Gastrocnemius medialis (tissue), 4 donors: ENCODE measurements at regions of chr14 and their contacts with region 1.

Region 1: DNA sequence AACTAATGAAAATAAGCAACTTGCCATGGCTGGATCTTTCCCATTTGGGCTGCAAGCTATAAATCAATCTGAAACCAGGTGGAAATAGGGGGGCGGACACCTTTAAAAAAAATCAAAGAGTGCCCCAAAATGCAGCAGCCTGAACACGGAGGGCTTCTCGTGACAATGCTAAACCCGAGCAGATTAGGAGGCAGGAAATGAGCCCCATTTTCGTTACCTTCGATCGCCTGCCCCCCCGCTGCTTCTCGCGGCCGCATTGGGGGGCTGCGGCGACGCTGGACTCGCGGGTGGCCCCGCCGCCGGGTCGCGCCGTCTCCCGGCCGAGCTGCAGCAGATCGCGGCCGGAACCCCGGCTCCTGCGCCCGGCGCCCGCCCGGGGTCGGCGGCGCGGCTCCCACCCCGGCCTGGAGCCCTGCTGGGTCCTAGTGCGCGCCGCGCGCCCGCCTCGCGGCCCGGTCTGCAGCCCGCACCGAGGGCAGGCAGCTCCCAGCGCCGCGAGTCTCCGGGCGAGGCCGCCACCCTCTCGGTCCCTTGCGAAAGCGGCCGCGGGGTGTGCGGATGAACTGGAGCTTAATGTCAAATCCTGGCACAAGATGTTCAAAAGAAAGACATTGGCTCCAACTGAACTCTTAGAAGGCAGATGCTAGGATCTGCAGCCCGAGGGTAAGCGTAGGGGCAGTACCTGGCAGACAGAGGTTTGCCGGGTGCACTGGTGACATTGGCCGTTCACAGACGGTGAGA is 201.9 kb upstream of the FOXN3 start:
- DNase-seq: peak; percentile 53 to 74
- ATAC-seq: peak; percentile 72 to 77
- H3K4me3 ChIP-seq: peak overlapping the region; percentile 65 to 73 (median 72)
- H3K27ac ChIP-seq: peak overlapping the region; percentile 78 to 87 (median 85)
- H3K4me1 ChIP-seq: peaks cover 36 to 39% of the 10 kb centered on the region in 2 donors
- H3K27me3 ChIP-seq: no peaks in the 10 kb centered on the region
- CTCF ChIP-seq: no peak
- POLR2A ChIP-seq: peak; percentile 48 to 57

Region 2: GRCh38 chr14:89185919-89186855 is 432.8 kb before region 1 on chr14:
- in situ Hi-C with region 1: no loop called
- intact Hi-C with region 1: loop called (anchors 10 kb)
- DNase-seq: peak; percentile 72 to 80
- ATAC-seq: peak; percentile 78 to 84
- H3K4me3 ChIP-seq: peak overlapping the region in 3 of 4 donors; percentile 30 to 36 (median 33)
- H3K27ac ChIP-seq: peak overlapping the region; percentile 89 to 93 (median 92)
- H3K4me1 ChIP-seq: peaks cover 51 to 54% of the 10 kb centered on the region in 2 donors
- H3K27me3 ChIP-seq: no peaks in the 10 kb centered on the region
- CTCF ChIP-seq: no peak
- POLR2A ChIP-seq: peak in 1 of 2 donors; percentile 33

Region 3: DNA sequence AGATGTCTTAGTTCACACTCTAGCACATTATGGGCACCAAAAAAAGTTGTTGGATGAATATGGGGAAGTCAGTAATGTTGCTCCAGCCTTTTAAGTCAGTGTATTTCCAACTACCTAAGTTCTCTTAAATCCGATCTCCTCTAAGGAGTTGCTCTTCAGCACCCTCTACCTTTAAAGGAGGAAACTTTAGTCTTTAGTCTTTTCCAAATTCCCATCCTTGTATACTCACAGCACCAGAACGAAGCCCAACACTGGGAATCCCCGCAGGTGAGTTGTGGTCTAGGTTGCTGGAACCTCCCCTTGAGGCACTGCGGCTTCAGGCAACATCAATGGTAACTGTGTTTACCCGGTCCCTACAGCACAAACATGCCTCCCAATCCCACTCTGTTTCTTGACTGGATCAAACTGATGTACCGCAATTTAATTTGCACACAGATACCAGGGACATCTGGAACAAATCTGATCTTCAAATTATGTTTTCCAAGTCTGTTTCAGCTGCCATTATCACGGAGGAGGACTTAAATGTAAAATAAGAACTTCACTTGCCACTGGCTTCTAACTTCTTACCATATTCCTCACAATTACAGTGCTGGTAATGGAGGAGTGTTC is 381.0 kb before region 1 on chr14:
- in situ Hi-C with region 1: no loop called
- intact Hi-C with region 1: loop called (anchors 10 kb)
- DNase-seq: no peak
- ATAC-seq: peak in 1 of 2 donors; percentile 55
- H3K4me3 ChIP-seq: no peak overlapping the region
- H3K27ac ChIP-seq: no peak overlapping the region
- H3K4me1 ChIP-seq: peaks cover 12 to 32% of the 10 kb centered on the region in 2 donors
- H3K27me3 ChIP-seq: no peaks in the 10 kb centered on the region
- CTCF ChIP-seq: peak; percentile 13 to 53 (median 52)
- POLR2A ChIP-seq: no peak

Region 4: GRCh38 chr14:89660166-89660565 is 41.2 kb after region 1 on chr14:
- in situ Hi-C with region 1: no loop called
- intact Hi-C with region 1: loop called (anchors 2 kb)
- DNase-seq: peak; percentile 51 to 52
- ATAC-seq: peak; percentile 96 to 97
- H3K4me3 ChIP-seq: peak overlapping the region; percentile 12 to 36 (median 24)
- H3K27ac ChIP-seq: peak overlapping the region; percentile 73 to 87 (median 80)
- H3K4me1 ChIP-seq: peaks cover 14 to 18% of the 10 kb centered on the region in 2 donors
- H3K27me3 ChIP-seq: no peaks in the 10 kb centered on the region
- CTCF ChIP-seq: no peak
- POLR2A ChIP-seq: no peak

Region 5: DNA sequence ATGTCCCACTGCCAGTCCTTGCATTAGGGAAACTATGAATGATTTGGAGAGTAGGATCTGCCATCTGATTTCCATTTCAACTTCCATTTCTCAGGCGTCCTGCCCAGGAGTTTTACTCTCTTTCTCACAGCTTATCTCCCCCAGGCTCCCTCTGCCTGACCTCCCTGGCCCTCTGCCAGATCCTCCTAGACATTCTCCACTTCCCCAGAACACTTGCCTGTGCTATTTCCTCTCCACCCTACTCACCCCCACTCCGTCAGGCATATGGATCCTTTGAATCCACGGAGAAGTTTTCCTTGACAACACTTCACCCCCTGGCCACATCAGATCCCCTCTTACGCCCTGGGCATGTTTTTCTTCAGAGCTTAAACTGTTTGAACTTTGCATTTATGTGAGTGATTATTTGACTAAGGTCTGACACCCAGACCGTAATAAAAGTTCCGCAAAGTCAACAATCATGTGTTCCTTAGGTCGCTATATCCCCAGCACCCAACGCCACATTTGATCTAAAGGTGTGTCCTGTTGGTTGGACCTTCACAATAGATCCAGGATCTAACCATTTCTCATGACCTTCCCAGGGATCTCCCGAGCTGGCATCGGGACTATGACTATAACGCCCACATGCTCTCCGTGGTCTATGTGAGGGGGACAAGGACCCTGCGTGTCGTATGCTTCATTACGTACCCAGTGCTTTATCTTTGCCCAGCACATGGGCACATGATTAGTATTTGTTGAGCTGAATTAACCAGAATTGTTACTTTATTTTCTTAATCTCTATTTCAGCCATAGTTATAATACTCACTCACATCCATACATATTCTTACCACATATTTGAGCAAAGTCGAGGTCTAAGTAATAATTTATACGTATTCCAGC is 53.9 kb after region 1 on chr14:
- in situ Hi-C with region 1: no loop called
- intact Hi-C with region 1: no loop called
- DNase-seq: no peak
- ATAC-seq: no peak
- H3K4me3 ChIP-seq: no peak overlapping the region
- H3K27ac ChIP-seq: no peak overlapping the region
- H3K4me1 ChIP-seq: no peaks in the 10 kb centered on the region
- H3K27me3 ChIP-seq: no peaks in the 10 kb centered on the region
- CTCF ChIP-seq: no peak
- POLR2A ChIP-seq: no peak

Region 6: GRCh38 chr14:89701211-89702043 is 82.4 kb after region 1 on chr14:
- in situ Hi-C with region 1: no loop called
- intact Hi-C with region 1: loop called (anchors 5 kb)
- DNase-seq: peak; percentile 67 to 78
- ATAC-seq: peak; percentile 80 to 82
- H3K4me3 ChIP-seq: peak overlapping the region; percentile 61 to 74 (median 68)
- H3K27ac ChIP-seq: peak overlapping the region; percentile 41 to 72 (median 68)
- H3K4me1 ChIP-seq: peaks cover 12 to 17% of the 10 kb centered on the region in 2 donors
- H3K27me3 ChIP-seq: no peaks in the 10 kb centered on the region
- CTCF ChIP-seq: no peak
- POLR2A ChIP-seq: no peak

Region 7: GRCh38 chr14:89792489-89793366 is 173.7 kb after region 1 on chr14:
- in situ Hi-C with region 1: no loop called
- intact Hi-C with region 1: loop called (anchors 5 kb)
- DNase-seq: peak; percentile 87 to 88
- ATAC-seq: peak; percentile 98 to 99
- H3K4me3 ChIP-seq: peak overlapping the region in 1 of 4 donors; percentile 29
- H3K27ac ChIP-seq: peak overlapping the region; percentile 81 to 91 (median 89)
- H3K4me1 ChIP-seq: peaks cover 18 to 26% of the 10 kb centered on the region in 2 donors
- H3K27me3 ChIP-seq: no peaks in the 10 kb centered on the region
- CTCF ChIP-seq: no peak
- POLR2A ChIP-seq: no peak